MCF 10A (cell line): ENCODE measurements at regions of chr14 and their contacts with region 1.

Region 1: DNA sequence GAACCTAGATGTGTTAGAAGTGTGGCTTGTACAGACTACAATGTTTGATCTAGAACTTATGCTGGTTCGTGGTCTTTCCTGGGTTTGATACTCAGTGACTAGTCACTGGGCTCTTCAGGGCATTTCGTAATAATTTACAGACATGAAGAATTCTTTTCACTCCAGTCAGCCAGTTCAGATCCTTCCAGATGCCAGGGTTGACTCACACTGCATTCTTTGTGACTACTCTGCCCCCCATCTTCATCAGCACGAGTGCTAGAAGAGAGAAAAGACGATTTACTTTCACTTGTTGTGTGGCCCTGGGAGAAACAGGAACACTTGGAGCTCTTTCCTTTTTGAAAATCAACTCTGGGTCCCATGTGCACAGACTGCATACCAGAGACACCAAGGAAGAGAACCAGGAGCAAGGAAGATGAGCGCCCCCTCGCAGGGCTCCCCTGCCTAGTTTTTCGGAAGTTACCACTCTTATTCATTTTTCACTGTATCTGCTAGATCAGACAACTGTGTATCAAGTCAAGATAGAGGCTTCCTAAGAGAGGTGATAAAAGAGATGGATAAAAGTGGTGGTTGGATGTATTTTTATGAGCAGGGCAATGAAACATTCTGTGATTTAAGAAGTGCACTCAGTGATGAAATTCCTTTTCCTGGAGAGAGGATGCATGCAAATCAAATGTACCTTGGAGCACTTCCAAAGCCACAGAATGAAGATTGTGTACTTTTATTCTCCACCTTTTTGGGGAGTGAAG is 33.5 kb upstream of the EVL start:
- DNase-seq: peak; percentile 99
- H3K4me3 Mint-ChIP-seq: peak overlapping the region; percentile 92
- H3K27ac Mint-ChIP-seq: peak overlapping the region; percentile 88
- H3K4me1 Mint-ChIP-seq: peaks cover 59% of the 10 kb centered on the region
- H3K27me3 Mint-ChIP-seq: no peaks in the 10 kb centered on the region
- CTCF ChIP-seq: no peak

Region 2: DNA sequence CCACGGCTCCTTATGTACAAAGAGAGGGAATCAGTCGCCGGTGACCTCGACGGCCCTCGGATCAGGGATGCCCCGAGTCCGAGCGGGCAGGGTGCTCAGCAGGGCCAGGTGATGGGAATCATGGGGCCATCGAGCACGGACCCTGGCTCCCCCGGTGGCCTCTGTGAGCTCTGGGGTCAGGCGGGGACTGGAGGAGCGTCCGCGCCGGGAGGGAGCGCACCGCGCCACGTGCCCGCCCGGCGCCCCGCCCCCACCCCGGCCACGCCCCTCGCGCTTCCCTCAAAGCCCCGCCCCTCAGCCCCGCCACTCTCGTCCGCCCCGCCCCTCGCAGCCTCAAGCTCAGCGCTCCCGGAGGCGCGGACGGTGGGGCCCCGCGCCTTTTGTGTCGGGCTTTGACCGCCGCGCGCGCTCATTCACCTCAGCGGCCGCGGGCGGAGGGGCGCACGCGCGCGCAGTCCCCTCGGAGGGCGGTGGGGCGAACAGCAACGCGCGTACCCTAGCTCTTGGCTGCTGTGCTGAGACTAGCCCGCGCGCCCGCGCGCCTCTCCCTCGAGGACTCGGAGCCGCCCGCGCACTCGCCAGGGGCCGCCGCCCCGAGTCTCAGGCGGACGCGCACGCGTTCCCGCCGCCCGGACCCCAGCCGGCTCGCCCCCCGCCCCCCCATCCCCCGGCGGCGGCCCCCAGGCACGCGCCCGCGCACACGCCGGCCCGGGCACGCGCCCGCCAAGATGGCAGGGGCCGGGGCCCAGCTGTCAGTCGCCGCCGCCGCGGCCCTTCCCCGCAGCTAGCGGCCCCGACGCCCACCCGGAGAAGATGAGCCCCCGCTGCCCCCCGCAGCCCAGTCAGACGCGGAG is 60.4 kb before region 1 on chr14:
- CTCF ChIA-PET with region 1: interaction called, 5 read pairs
- POLR2A ChIA-PET with region 1: interaction called, 22 read pairs
- intact Hi-C with region 1: no loop called
- DNase-seq: peak; percentile 84
- H3K4me3 Mint-ChIP-seq: peak overlapping the region; percentile 91
- H3K27ac Mint-ChIP-seq: no peak overlapping the region
- H3K4me1 Mint-ChIP-seq: peaks cover 7% of the 10 kb centered on the region
- H3K27me3 Mint-ChIP-seq: no peaks in the 10 kb centered on the region
- CTCF ChIP-seq: no peak

Region 3: GRCh38 chr14:99995700-99996356 is 35.9 kb before region 1 on chr14:
- CTCF ChIA-PET with region 1: interaction called, 6 read pairs
- POLR2A ChIA-PET with region 1: interaction called, 15 read pairs
- intact Hi-C with region 1: loop called (anchors 5 kb)
- DNase-seq: peak; percentile 71
- H3K4me3 Mint-ChIP-seq: no peak overlapping the region
- H3K27ac Mint-ChIP-seq: no peak overlapping the region
- H3K4me1 Mint-ChIP-seq: peaks cover 24% of the 10 kb centered on the region
- H3K27me3 Mint-ChIP-seq: no peaks in the 10 kb centered on the region
- CTCF ChIP-seq: peak; percentile 60

Region 4: GRCh38 chr14:100049220-100049619 is 17.5 kb after region 1 on chr14:
- CTCF ChIA-PET with region 1: interaction called, 10 read pairs
- POLR2A ChIA-PET with region 1: interaction called, 10 read pairs
- intact Hi-C with region 1: no loop called
- DNase-seq: peak; percentile 36
- H3K4me3 Mint-ChIP-seq: no peak overlapping the region
- H3K27ac Mint-ChIP-seq: no peak overlapping the region
- H3K4me1 Mint-ChIP-seq: peaks cover 21% of the 10 kb centered on the region
- H3K27me3 Mint-ChIP-seq: no peaks in the 10 kb centered on the region
- CTCF ChIP-seq: no peak

Region 5: DNA sequence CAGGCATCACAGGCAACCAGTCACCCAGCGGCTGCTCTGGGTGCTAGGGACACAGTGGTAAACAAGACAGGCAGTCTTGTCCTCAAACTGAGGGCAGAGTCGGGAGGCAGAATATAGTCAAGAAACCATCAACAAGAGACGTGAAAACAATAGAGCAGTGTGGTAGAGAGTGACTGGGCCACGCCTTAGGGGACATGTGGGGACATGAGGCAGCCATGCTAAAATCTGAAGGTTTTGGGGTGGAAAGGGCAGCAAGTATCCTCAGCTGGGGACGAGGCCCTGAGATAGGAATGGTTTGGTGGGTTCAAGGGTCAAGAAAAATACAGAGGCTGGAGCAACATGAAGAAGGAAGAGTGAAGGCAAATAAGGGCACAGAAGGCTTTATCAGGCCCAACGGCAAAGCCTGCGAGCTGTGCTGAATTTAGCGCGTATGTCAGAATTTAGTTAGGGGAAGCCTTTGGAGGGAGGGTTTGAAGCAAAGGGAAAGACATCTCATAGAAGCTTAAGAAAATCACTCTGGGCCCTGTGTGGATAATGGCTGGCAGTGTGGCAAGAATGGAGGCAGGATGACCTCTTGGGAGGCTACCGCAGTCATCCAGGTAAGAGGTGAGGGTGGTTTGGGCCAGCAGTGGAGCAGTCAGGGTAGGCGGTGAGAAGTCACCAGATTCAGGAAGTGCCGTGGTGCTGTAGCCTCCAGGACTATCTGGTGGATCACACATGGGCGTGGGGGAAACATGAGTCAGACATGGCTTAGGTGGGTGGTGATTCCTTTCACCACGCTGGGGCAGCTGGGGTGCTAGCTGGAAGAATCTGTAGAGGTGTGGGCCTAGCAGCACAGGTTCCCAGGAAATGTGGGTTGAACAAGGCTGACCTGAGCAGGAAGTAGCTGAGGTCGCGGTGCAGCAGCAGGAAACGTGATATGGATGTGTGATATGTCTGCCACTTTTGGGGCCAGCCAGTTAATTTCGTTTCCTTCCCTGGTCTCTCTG is 36.6 kb after region 1 on chr14:
- CTCF ChIA-PET with region 1: interaction called, 5 read pairs
- POLR2A ChIA-PET with region 1: interaction called, 30 read pairs
- intact Hi-C with region 1: no loop called
- DNase-seq: peak; percentile 73
- H3K4me3 Mint-ChIP-seq: no peak overlapping the region
- H3K27ac Mint-ChIP-seq: peak overlapping the region; percentile 78
- H3K4me1 Mint-ChIP-seq: peaks cover 29% of the 10 kb centered on the region
- H3K27me3 Mint-ChIP-seq: no peaks in the 10 kb centered on the region
- CTCF ChIP-seq: no peak

Region 6: GRCh38 chr14:100096570-100096971 is 64.9 kb after region 1 on chr14:
- CTCF ChIA-PET with region 1: no interaction called
- POLR2A ChIA-PET with region 1: interaction called, 19 read pairs
- intact Hi-C with region 1: no loop called
- DNase-seq: peak; percentile 86
- H3K4me3 Mint-ChIP-seq: no peak overlapping the region
- H3K27ac Mint-ChIP-seq: peak overlapping the region; percentile 81
- H3K4me1 Mint-ChIP-seq: peaks cover 40% of the 10 kb centered on the region
- H3K27me3 Mint-ChIP-seq: no peaks in the 10 kb centered on the region
- CTCF ChIP-seq: no peak

Region 7: DNA sequence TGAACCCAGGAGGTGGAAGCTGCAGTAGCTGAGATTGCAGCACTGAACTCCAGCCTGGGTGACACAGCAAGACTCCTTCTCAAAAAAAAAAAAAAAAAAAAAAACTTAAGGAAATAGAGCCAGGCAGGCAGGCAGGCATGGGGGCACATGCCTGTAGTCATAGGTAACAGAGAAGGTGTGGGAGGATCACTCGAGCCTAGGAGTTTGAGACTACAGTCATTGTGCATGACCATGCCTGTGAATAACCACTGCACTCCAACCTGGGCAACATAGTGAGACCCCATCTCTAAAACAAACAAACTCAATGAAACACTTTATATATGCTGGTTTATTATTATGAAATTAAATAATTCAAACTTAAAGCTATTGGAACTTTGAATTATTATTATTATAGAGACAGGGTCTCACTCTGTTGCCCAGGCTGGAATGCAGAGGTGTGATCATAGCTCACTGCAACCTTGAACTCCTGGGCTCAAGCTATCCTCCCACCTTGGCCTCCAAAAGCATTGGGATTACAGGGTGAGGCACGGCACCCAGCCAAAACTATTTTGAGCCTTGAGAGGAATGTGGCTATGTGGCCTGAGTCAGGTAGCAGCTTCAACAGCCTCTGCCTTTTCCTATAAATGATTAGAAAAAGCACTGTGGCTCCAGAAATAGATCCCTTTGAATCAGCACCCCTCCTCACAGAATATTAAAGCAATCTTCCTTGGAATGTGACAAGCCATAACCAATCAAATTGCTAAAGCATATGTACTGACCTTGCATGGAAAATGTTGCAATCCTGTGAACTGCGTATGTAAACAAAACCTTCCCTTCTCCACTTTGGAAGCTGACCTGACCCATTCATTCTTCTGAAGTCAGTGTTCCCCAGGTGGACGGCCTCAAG is 172.5 kb after region 1 on chr14:
- CTCF ChIA-PET with region 1: interaction called, 3 read pairs
- POLR2A ChIA-PET with region 1: interaction called, 11 read pairs
- intact Hi-C with region 1: no loop called
- DNase-seq: peak; percentile 87
- H3K4me3 Mint-ChIP-seq: no peak overlapping the region
- H3K27ac Mint-ChIP-seq: peak overlapping the region; percentile 70
- H3K4me1 Mint-ChIP-seq: no peaks in the 10 kb centered on the region
- H3K27me3 Mint-ChIP-seq: no peaks in the 10 kb centered on the region
- CTCF ChIP-seq: no peak